ENCODE measurements at regions of chr12 and their contacts with region 1.

Region 1: DNA sequence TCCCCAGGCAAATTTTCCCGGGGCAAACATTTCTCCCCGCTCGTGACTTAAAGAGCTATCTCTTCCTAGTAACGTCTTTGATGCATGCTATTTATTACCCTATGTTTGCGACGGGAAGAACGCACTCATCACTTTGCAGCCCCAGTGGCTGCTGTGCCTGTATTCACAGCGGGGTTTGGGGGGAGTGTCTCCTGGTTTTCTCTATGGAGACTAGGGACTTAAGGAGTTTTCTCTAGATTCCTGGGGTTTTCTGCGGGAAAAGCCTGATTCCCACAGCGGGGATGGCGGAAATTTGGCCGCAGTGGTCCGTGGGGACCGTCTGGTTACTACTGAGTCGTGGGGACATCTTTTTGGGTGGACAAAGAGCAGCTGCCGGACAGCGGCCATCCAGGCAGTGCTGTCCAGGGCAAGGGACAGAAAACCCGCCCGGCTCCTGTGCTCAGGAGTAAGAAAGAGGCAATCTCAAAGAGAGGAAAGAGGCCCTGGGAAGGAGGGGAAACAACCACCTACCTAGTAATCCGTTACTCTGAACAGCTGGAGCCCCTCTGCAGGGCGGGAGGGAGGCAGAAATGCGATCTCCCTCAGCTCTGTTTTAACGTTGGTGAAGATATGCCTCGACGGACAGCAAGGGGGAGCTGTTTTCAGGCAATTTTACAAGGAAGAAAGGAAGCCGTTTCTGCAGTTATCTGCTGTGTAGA is 771 bp upstream of the AVPR1A start:
- DNase-seq: peak; percentile 83
- H3K4me3 ChIP-seq: peak overlapping the region; percentile 40
- H3K27ac ChIP-seq: no peak overlapping the region
- H3K4me1 ChIP-seq: no peaks in the 10 kb centered on the region
- H3K27me3 ChIP-seq: peaks cover 45% of the 10 kb centered on the region
- CTCF ChIP-seq: peak; percentile 90

Region 2: DNA sequence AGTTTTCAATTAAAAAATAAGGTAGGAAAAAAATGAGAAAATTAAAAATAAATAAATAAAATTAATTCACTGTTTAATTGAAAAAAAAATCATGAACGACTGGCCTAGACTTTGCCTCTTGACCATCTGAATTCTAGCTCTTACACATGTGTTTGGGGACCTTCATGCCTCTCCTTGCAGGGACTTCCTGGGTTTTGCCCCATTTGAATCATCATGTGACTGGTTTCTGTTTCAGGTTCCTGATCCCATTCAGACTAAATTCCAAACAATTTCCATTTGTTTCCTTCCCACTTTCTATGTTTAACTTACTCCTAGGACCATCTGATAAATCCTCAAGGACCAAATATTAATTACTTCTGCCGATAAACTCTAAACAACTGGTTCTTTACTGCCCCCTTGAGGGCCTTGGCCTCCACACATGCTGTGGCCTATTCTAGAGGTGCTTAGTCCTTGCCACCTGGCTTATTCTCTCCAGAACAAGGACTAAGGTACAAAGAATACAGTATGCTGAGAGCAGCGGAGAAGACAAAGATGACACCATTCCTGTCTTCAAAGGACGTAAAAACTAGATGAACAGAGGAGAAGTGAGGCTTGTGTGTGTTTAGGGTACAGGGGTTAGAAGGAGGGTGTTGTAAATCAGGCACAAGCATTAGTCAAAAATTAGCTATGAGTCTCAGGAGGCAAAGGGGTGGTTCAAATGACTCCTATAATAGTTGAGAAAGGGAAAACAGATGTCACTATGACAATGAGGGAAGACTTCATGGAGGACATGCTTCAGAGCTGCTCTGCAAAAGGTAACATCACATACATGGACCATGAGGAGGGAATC is 125.0 kb after region 1 on chr12:
- CTCF ChIA-PET with region 1: no interaction called
- POLR2A ChIA-PET with region 1: no interaction called
- intact Hi-C with region 1: loop called (anchors 5 kb)
- DNase-seq: peak; percentile 67
- H3K4me3 ChIP-seq: no peak overlapping the region
- H3K27ac ChIP-seq: no peak overlapping the region
- H3K4me1 ChIP-seq: no peaks in the 10 kb centered on the region
- H3K27me3 ChIP-seq: no peaks in the 10 kb centered on the region
- CTCF ChIP-seq: peak; percentile 93

Measured in A673 (cell line).